Prostate gland (tissue), 2 donors: ENCODE measurements at regions of chr7 and their contacts with region 1.

Region 1: GRCh38 chr7:154927624-154928143 is 75.2 kb downstream of the PAXIP1 start:
- DNase-seq: peak; percentile 90
- H3K4me3 ChIP-seq: peak overlapping the region; percentile 42 to 55
- H3K27ac ChIP-seq: peak overlapping the region; percentile 93
- H3K4me1 ChIP-seq: no peaks in the 10 kb centered on the region
- H3K27me3 ChIP-seq: no peaks in the 10 kb centered on the region
- CTCF ChIP-seq: peak; percentile 34 to 79 (median 66)
- POLR2A ChIP-seq: no peak

Region 2: GRCh38 chr7:155003376-155004214 is 75.9 kb after region 1 on chr7:
- intact Hi-C with region 1: loop called (anchors 5 kb)
- DNase-seq: peak; percentile 64
- H3K4me3 ChIP-seq: peak overlapping the region; percentile 95 to 97
- H3K27ac ChIP-seq: peak overlapping the region; percentile 93 to 95
- H3K4me1 ChIP-seq: no peaks in the 10 kb centered on the region
- H3K27me3 ChIP-seq: no peaks in the 10 kb centered on the region
- CTCF ChIP-seq: peak in 1 of 4 experiments; percentile 0
- POLR2A ChIP-seq: peak; percentile 34

Region 3: DNA sequence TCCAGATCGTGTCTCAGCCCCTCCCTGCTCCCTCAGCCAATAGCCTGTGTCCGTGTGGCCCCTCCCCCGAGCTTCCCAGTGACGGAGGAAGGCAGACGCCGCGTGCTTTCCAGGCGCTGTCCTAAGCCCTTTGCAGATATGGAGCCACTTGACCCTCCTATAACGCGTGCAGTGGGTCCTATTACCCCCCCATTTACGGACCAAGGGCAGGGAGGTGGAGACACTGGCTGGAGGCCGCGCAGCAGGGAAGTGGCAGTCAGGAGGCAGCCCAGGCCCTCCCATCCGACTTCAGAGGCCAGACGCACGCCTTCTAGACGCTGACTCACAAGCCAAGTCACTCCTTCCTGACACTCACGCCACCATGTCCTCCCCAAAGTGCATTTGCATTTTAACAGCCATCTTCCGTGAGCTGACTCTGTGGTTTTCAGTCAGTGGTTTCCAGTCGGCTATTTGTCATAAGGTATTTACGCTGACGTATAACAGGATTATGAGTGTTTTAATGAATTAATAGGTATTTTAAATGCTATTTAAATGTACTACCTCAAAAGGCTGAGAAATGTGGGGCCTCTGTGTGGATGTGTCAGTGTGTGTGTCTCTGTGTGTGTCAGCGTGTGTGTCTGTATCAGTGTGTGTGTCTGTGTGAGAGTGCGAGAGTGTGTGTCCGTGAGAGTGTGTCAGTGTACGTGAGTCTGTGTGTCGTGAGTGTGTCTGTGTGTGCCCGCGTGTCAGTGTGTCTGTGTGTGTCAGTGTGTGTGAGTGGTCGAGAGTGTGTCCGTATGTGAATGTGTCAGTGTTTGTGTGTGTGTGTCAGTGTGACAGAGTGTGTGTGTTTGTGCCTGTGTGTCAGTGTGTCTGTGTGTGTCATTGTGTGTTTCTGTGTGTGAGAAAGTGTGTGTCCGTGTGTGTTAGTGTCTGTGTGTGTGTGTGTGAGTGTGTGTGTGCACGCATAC is 278.0 kb after region 1 on chr7:
- intact Hi-C with region 1: loop called (anchors 10 kb)
- DNase-seq: peak; percentile 69
- H3K4me3 ChIP-seq: peak overlapping the region; percentile 19
- H3K27ac ChIP-seq: peak overlapping the region; percentile 18 to 66
- H3K4me1 ChIP-seq: no peaks in the 10 kb centered on the region
- H3K27me3 ChIP-seq: no peaks in the 10 kb centered on the region
- CTCF ChIP-seq: no peak
- POLR2A ChIP-seq: no peak

Region 4: DNA sequence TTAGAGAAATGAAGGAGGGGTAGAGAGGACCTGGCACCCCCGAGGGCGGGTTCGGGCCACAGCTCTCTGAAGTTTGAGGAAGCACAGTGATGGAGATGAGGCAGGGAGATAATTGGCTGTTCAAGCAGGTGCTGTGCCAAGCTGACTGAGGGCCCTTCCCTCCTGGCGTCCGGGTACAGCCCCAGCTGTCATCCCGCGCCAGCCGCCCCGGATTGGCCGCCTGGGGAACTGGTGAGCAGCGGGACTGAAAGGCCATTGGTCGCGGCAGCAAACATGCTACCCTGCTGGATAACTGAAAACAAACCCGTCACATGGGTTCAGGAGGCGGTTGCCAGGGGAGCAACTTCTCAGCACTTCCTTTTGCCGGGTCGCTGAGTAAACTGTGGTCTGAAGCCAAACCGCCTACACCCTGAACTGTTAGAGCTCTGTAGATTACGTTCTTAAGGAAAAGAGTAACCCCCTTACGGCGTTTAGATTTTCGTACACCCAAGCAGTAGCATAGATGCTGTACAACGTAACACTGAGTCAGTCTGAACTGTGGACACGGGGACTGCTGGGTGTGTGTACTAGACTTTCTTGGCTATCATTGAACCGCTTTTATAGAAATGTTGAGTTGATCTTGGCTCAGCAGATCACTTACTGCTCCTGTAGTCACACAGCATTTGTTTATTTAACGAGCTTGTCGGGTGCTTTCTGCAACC is 371.3 kb after region 1 on chr7:
- intact Hi-C with region 1: loop called (anchors 2 kb)
- DNase-seq: peak; percentile 95
- H3K4me3 ChIP-seq: peak overlapping the region; percentile 82 to 95
- H3K27ac ChIP-seq: peak overlapping the region; percentile 93 to 97
- H3K4me1 ChIP-seq: peaks cover 6% of the 10 kb centered on the region
- H3K27me3 ChIP-seq: no peaks in the 10 kb centered on the region
- CTCF ChIP-seq: peak in 1 of 4 experiments; percentile 45
- POLR2A ChIP-seq: peak; percentile 62

Region 5: GRCh38 chr7:155344600-155345433 is 417.1 kb after region 1 on chr7:
- intact Hi-C with region 1: loop called (anchors 5 kb)
- DNase-seq: peak; percentile 48
- H3K4me3 ChIP-seq: peak overlapping the region; percentile 25 to 33
- H3K27ac ChIP-seq: no peak overlapping the region
- H3K4me1 ChIP-seq: no peaks in the 10 kb centered on the region
- H3K27me3 ChIP-seq: peaks cover 5% of the 10 kb centered on the region
- CTCF ChIP-seq: peak; percentile 94 to 97 (median 95)
- POLR2A ChIP-seq: no peak

Region 6: DNA sequence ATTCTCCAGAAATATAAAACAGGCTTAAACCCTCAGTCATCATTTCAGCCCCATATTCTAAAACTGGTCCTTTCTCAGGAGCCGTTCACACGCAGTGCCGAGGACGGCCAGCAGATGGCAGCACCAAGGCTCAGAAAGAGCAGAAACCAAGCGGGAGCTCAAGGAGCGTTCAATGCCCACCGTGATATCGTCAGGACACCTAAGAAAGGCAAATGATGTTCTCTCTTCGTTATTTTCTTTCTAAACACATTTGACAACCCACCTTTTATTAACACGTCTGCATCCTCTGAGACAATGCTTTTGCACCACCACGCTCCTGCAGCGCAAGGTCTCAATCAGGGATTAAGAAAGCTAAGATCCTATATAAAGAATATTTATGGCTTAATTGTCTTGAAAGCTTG is 671.1 kb after region 1 on chr7:
- intact Hi-C with region 1: no loop called
- DNase-seq: peak; percentile 72
- H3K4me3 ChIP-seq: no peak overlapping the region
- H3K27ac ChIP-seq: no peak overlapping the region
- H3K4me1 ChIP-seq: no peaks in the 10 kb centered on the region
- H3K27me3 ChIP-seq: peaks cover 14% of the 10 kb centered on the region
- CTCF ChIP-seq: peak; percentile 85 to 98 (median 92)
- POLR2A ChIP-seq: no peak

Region 7: GRCh38 chr7:155738652-155739537 is 811.2 kb after region 1 on chr7:
- intact Hi-C with region 1: loop called (anchors 10 kb)
- DNase-seq: peak; percentile 69
- H3K4me3 ChIP-seq: no peak overlapping the region
- H3K27ac ChIP-seq: no peak overlapping the region
- H3K4me1 ChIP-seq: no peaks in the 10 kb centered on the region
- H3K27me3 ChIP-seq: no peaks in the 10 kb centered on the region
- CTCF ChIP-seq: peak in 3 of 4 experiments; percentile 54 to 65 (median 61)
- POLR2A ChIP-seq: no peak

Region 8: GRCh38 chr7:155763691-155764437 is 836.2 kb after region 1 on chr7:
- intact Hi-C with region 1: loop called (anchors 10 kb)
- DNase-seq: no peak
- H3K4me3 ChIP-seq: no peak overlapping the region
- H3K27ac ChIP-seq: no peak overlapping the region
- H3K4me1 ChIP-seq: no peaks in the 10 kb centered on the region
- H3K27me3 ChIP-seq: no peaks in the 10 kb centered on the region
- CTCF ChIP-seq: no peak
- POLR2A ChIP-seq: no peak